ENCODE measurements at regions of chr6 and their contacts with region 1.

Region 1: GRCh38 chr6:154928325-154928922 is 66.7 kb upstream of the TIAM2 start:
- DNase-seq: peak in 30 of 35 experiments; percentile 9 to 76 (median 36)
- ATAC-seq: peak in 1 of 4 experiments; percentile 48
- H3K4me3 ChIP-seq: no peak overlapping the region
- H3K4me3 Mint-ChIP-seq: no peak overlapping the region
- H3K27ac ChIP-seq: no peak overlapping the region
- H3K27ac Mint-ChIP-seq: no peak overlapping the region
- H3K4me1 ChIP-seq: no peaks in the 10 kb centered on the region
- H3K4me1 Mint-ChIP-seq: peaks cover 6 to 13% (median 11%) of the 10 kb centered on the region in 3 donors
- H3K27me3 ChIP-seq: no peaks in the 10 kb centered on the region
- H3K27me3 Mint-ChIP-seq: no peaks in the 10 kb centered on the region

Region 2: GRCh38 chr6:155174576-155175211 is 246.3 kb after region 1 on chr6:
- CTCF ChIA-PET with region 1: interaction called, 5 to 47 read pairs
- POLR2A ChIA-PET with region 1: no interaction called
- DNase-seq: peak; percentile 2 to 82 (median 40)
- ATAC-seq: peak; percentile 50 to 72 (median 65)
- H3K4me3 ChIP-seq: no peak overlapping the region
- H3K4me3 Mint-ChIP-seq: no peak overlapping the region
- H3K27ac ChIP-seq: no peak overlapping the region
- H3K27ac Mint-ChIP-seq: peak overlapping the region in 1 of 2 donors; percentile 16
- H3K4me1 ChIP-seq: peaks cover 0 to 10% of the 10 kb centered on the region in 2 experiments
- H3K4me1 Mint-ChIP-seq: peaks cover 19 to 36% (median 29%) of the 10 kb centered on the region in 3 donors
- H3K27me3 ChIP-seq: no peaks in the 10 kb centered on the region
- H3K27me3 Mint-ChIP-seq: no peaks in the 10 kb centered on the region

Region 3: GRCh38 chr6:155301867-155302266 is 373.4 kb after region 1 on chr6:
- CTCF ChIA-PET with region 1: interaction called in 1 of 2 experiments, 11 read pairs
- POLR2A ChIA-PET with region 1: no interaction called
- DNase-seq: no peak
- ATAC-seq: no peak
- H3K4me3 ChIP-seq: no peak overlapping the region
- H3K4me3 Mint-ChIP-seq: no peak overlapping the region
- H3K27ac ChIP-seq: no peak overlapping the region
- H3K27ac Mint-ChIP-seq: no peak overlapping the region
- H3K4me1 ChIP-seq: no peaks in the 10 kb centered on the region
- H3K4me1 Mint-ChIP-seq: peaks cover 0 to 16% (median 9%) of the 10 kb centered on the region in 3 donors
- H3K27me3 ChIP-seq: no peaks in the 10 kb centered on the region
- H3K27me3 Mint-ChIP-seq: no peaks in the 10 kb centered on the region